ENCODE measurements at regions of chr17 and their contacts with region 1.

Region 1: DNA sequence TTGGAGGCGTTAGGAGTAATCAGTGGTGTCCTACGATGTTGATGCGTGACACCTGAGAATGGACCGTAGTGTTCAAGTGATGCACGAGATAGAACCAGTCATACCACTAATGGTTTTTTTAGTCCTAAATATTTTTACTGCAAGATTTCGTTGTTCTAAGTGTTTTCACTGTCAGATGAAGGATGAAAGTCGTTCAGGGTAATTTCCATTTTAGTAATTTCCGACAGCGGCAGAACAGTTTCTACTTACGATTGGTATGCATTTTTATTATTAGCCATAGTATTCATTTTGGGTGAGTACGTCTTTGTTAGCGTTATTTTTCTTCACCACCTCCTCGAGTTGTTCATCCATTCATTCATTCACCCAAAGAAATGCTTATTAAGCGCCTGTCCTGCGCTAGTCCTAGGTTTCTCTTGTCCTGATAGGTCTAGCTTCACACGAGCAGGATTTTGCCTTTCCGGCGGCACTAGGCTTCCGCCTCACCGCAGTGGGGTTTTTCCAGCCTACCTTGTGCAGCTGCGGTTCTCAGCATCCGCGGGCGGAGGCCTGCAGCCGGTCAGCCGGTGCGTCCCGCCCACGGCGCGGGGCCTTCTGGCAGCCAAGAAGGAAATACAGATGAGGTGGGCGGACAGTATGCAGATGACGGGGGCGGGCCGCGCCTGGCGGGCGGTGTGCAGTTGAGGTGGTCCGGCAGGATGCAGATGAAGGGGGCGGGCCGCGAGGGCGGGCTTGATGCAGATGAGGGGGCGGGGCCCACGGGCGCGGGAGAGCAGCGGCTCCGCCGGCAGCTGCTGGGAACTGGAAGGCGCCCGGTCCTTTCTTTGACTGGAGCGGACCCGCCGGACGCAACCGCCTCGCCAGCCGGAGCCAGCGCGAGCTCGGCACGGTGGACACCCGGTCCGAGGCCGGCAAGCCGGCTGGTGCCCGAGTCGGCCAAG is 146.4 kb downstream of the SPECC1 start:
- DNase-seq: peak; percentile 84 to 89 (median 87)
- H3K4me3 ChIP-seq: peak overlapping the region; percentile 21 to 76 (median 46)
- H3K4me3 Mint-ChIP-seq: no peak overlapping the region
- H3K27ac ChIP-seq: no peak overlapping the region
- H3K27ac Mint-ChIP-seq: peak overlapping the region in 4 of 7 donors; percentile 16 to 69 (median 46)
- H3K4me1 ChIP-seq: peaks cover 15 to 20% of the 10 kb centered on the region in 2 donors
- H3K4me1 Mint-ChIP-seq: peaks cover 5% of the 10 kb centered on the region
- H3K27me3 ChIP-seq: no peaks in the 10 kb centered on the region
- H3K27me3 Mint-ChIP-seq: peaks cover 4 to 7% (median 6%) of the 10 kb centered on the region in 3 donors
- CTCF ChIP-seq: no peak

Region 2: DNA sequence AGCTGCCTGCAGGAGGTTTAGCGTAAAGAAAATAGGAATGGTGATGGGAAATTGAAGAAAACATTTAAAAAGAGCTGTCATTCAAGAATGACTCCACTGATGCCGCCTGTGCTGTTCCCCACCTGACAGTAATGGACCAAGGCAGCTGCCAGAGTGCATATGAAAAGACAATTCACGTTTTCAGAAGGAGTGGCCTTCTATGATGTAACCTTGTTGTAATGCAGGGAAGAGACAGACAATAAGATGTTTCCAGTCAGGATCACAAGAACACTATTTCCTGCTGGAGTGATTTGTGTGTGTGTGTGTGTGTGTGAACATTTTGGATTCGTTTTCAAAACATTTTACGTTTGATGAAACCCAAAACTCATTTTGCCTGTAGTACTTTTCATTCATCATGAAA is 108.1 kb after region 1 on chr17:
- intact Hi-C with region 1: no loop called
- DNase-seq: no peak
- H3K4me3 ChIP-seq: no peak overlapping the region
- H3K4me3 Mint-ChIP-seq: no peak overlapping the region
- H3K27ac ChIP-seq: no peak overlapping the region
- H3K27ac Mint-ChIP-seq: peak overlapping the region in 2 of 7 donors; percentile 20 to 78
- H3K4me1 ChIP-seq: peaks cover 3 to 6% of the 10 kb centered on the region in 2 donors
- H3K4me1 Mint-ChIP-seq: peaks cover 32% of the 10 kb centered on the region
- H3K27me3 ChIP-seq: no peaks in the 10 kb centered on the region
- H3K27me3 Mint-ChIP-seq: peaks cover 0 to 1% (median 1%) of the 10 kb centered on the region in 3 donors
- CTCF ChIP-seq: no peak

Region 3: GRCh38 chr17:21551081-21551881 is 1395.8 kb after region 1 on chr17:
- intact Hi-C with region 1: loop called in 1 of 2 experiments (anchors 5 kb)
- DNase-seq: peak; percentile 48 to 68 (median 54)
- H3K4me3 ChIP-seq: peak overlapping the region; percentile 52 to 82 (median 55)
- H3K4me3 Mint-ChIP-seq: peak overlapping the region; percentile 82 to 91
- H3K27ac ChIP-seq: no peak overlapping the region
- H3K27ac Mint-ChIP-seq: peak overlapping the region in 2 of 7 donors; percentile 5 to 55
- H3K4me1 ChIP-seq: peaks cover 23 to 25% of the 10 kb centered on the region in 2 donors
- H3K4me1 Mint-ChIP-seq: peaks cover 31% of the 10 kb centered on the region
- H3K27me3 ChIP-seq: peaks cover 22 to 33% of the 10 kb centered on the region in 2 donors
- H3K27me3 Mint-ChIP-seq: peaks cover 36 to 45% (median 39%) of the 10 kb centered on the region in 3 donors
- CTCF ChIP-seq: no peak

Measured in CD14-positive monocyte (primary cell).